Heart right ventricle (tissue), 16 donors: ENCODE measurements at regions of chr4 and their contacts with region 1.

Region 1: DNA sequence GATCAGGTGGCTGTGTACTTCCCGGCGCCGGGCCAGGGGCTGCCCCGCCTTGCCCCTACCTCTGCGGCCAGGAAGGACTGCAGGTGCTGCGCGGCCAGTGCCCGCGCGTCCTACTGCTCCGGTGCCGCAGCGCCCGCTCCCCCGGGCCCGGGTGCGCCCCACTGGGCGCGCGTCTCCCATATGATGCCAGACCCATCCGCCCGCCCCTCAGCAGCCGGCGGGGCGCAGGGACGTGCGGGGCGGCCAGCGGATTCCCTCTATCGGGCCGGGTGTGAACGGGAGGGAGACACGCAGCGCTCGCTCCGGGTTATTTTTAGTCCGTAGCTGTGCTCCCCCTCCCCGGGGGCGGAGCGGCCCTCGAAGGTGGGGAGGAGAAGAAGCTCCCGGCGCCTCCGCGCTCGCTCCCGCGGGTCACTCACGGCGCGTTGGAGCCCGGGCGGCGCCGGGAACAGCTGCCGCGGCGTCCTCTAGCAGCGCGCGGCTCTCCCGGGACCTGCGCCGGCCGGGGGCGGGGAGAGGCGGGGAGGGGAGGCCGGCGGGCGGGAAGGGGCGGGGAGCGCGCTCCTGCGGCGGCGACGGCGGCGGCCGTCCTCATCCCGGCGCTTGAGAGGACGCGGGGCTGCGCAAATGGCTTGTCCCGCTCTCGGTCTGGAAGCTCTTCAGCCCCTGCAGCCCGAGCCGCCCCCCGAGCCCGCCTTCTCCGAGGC is 103.6 kb downstream of the UCHL1 start:
- DNase-seq: peak; percentile 81 to 85
- ATAC-seq: peak; percentile 73 to 92 (median 84)
- H3K4me3 ChIP-seq: peak overlapping the region; percentile 72 to 97 (median 85)
- H3K27ac ChIP-seq: peak overlapping the region; percentile 84 to 95 (median 92)
- H3K4me1 ChIP-seq: peaks cover 9 to 47% (median 36%) of the 10 kb centered on the region in 9 donors
- H3K27me3 ChIP-seq: peaks cover 0 to 39% (median 0%) of the 10 kb centered on the region in 7 donors
- CTCF ChIP-seq: no peak

Region 2: GRCh38 chr4:41060352-41061334 is 299.7 kb before region 1 on chr4:
- intact Hi-C with region 1: no loop called
- DNase-seq: no peak
- ATAC-seq: peak in 1 of 8 donors; percentile 76
- H3K4me3 ChIP-seq: no peak overlapping the region
- H3K27ac ChIP-seq: peak overlapping the region in 1 of 10 donors; percentile 3
- H3K4me1 ChIP-seq: peaks cover 12 to 58% (median 19%) of the 10 kb centered on the region in 9 donors
- H3K27me3 ChIP-seq: no peaks in the 10 kb centered on the region
- CTCF ChIP-seq: no peak

Region 3: GRCh38 chr4:41294445-41295062 is 65.8 kb before region 1 on chr4:
- intact Hi-C with region 1: loop called in 1 of 10 experiments (anchors 2 kb)
- DNase-seq: no peak
- ATAC-seq: no peak
- H3K4me3 ChIP-seq: no peak overlapping the region
- H3K27ac ChIP-seq: no peak overlapping the region
- H3K4me1 ChIP-seq: peaks cover 0 to 29% (median 0%) of the 10 kb centered on the region in 9 donors
- H3K27me3 ChIP-seq: no peaks in the 10 kb centered on the region
- CTCF ChIP-seq: no peak

Region 4: GRCh38 chr4:41418444-41418843 is 58.1 kb after region 1 on chr4:
- intact Hi-C with region 1: loop called in 3 of 10 experiments (anchors 5 to 10 kb)
- DNase-seq: peak; percentile 73 to 78
- ATAC-seq: peak; percentile 86 to 96 (median 92)
- H3K4me3 ChIP-seq: no peak overlapping the region
- H3K27ac ChIP-seq: peak overlapping the region in 9 of 10 donors; percentile 5 to 78 (median 58)
- H3K4me1 ChIP-seq: peaks cover 0 to 49% (median 32%) of the 10 kb centered on the region in 9 donors
- H3K27me3 ChIP-seq: peaks cover 0 to 15% (median 0%) of the 10 kb centered on the region in 7 donors
- CTCF ChIP-seq: no peak

Region 5: GRCh38 chr4:41432881-41433280 is 72.5 kb after region 1 on chr4:
- intact Hi-C with region 1: loop called in 5 of 10 experiments (anchors 5 to 10 kb)
- DNase-seq: no peak
- ATAC-seq: no peak
- H3K4me3 ChIP-seq: no peak overlapping the region
- H3K27ac ChIP-seq: peak overlapping the region in 5 of 10 donors; percentile 26 to 89 (median 69)
- H3K4me1 ChIP-seq: peaks cover 8 to 95% (median 78%) of the 10 kb centered on the region in 9 donors
- H3K27me3 ChIP-seq: no peaks in the 10 kb centered on the region
- CTCF ChIP-seq: no peak

Region 6: DNA sequence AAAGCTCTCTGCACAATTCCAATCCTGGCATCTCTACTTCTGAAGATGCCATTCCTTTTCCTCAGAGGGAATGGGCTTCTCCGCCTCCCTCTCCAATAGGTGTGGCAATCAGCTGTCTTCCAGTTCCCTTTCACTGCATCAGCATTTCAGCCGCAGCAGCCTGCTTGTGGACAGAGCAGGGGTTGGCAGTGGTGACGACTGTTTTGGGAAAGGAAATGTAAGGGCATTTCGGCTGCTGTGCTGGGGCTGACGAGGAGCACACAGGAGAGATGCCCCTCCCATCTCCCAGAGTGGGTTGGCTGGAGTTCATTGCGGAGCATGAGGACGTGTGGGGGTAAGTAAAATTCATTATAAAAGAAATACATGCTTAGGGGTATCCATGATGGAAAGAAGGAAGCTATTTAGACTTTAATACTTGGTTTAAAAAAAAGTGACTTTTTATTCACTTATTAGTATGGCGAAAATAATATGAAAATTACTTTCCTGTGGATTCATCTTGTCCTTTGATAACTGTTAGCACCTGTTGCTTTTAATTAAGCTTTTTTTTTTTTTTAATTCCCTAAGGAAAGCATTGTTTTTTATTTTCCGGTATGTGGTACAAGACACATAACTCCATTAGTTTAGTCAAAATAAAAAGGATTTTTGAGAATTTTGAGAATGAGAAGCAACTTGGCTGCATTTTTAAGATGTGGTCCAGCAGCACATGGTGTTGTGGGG is 177.8 kb after region 1 on chr4 and contains the start of gene LIMCH1:
- intact Hi-C with region 1: loop called in 7 of 10 experiments (anchors 2 to 10 kb)
- DNase-seq: peak; percentile 64 to 82
- ATAC-seq: peak; percentile 76 to 93 (median 82)
- H3K4me3 ChIP-seq: peak within 1 kb of the TSS in 9 of 10 donors; percentile 6 to 47 (median 39)
- H3K27ac ChIP-seq: peak within 1 kb of the TSS; percentile 44 to 96 (median 88)
- H3K4me1 ChIP-seq: peaks cover 11 to 100% (median 94%) of the 10 kb centered on the region in 9 donors
- H3K27me3 ChIP-seq: no peaks in the 10 kb centered on the region
- CTCF ChIP-seq: no peak
- total RNA-seq, gene LIMCH1: 242 to 410 (median 304) TPM

Region 7: GRCh38 chr4:41644288-41644914 is 284.0 kb after region 1 on chr4:
- intact Hi-C with region 1: loop called in 7 of 10 experiments (anchors 2 to 10 kb)
- DNase-seq: peak; percentile 76 to 82
- ATAC-seq: peak; percentile 91 to 95 (median 94)
- H3K4me3 ChIP-seq: peak overlapping the region in 6 of 10 donors; percentile 12 to 27 (median 20)
- H3K27ac ChIP-seq: peak overlapping the region in 3 of 10 donors; percentile 2 to 51 (median 14)
- H3K4me1 ChIP-seq: peaks cover 0 to 45% (median 23%) of the 10 kb centered on the region in 9 donors
- H3K27me3 ChIP-seq: peaks cover 0 to 22% (median 0%) of the 10 kb centered on the region in 7 donors
- CTCF ChIP-seq: peak; percentile 84 to 97 (median 91)